ENCODE measurements at regions of chr3 and their contacts with region 1.

Region 1: DNA sequence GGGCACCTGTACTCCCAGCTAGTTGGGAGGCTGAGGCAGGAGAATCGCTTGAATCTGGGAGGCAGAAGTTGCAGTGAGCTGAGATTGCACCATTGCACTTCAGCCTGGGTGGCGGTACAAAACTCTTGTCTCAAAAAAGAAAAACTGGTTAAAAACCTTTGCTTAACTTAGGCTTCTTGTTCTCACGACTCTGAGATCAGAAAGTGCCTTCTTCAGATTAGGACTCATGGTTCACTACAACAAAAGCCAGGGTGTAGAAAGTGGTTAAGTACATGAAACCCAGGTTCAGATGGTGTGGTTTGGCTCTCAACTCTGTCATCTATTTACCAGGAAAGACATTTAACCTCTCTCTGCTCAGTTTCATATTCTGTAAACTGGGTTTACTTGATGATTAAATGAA is 168.4 kb downstream of the TUSC7 start:
- ATAC-seq: no peak
- H3K4me3 ChIP-seq: no peak overlapping the region
- H3K27ac ChIP-seq: no peak overlapping the region
- H3K4me1 ChIP-seq: no peaks in the 10 kb centered on the region

Region 2: GRCh38 chr3:117019082-117019713 is 141.2 kb after region 1 on chr3:
- in situ Hi-C with region 1: loop called in 1 of 9 experiments (anchors 10 kb)
- ATAC-seq: peak; percentile 69 to 98 (median 94)
- H3K4me3 ChIP-seq: no peak overlapping the region
- H3K27ac ChIP-seq: no peak overlapping the region
- H3K4me1 ChIP-seq: peaks cover 8 to 31% of the 10 kb centered on the region in 2 donors